Right ventricle myocardium inferior (tissue), 1 donor: ENCODE measurements at regions of chr19 and their contacts with region 1.

Region 1: DNA sequence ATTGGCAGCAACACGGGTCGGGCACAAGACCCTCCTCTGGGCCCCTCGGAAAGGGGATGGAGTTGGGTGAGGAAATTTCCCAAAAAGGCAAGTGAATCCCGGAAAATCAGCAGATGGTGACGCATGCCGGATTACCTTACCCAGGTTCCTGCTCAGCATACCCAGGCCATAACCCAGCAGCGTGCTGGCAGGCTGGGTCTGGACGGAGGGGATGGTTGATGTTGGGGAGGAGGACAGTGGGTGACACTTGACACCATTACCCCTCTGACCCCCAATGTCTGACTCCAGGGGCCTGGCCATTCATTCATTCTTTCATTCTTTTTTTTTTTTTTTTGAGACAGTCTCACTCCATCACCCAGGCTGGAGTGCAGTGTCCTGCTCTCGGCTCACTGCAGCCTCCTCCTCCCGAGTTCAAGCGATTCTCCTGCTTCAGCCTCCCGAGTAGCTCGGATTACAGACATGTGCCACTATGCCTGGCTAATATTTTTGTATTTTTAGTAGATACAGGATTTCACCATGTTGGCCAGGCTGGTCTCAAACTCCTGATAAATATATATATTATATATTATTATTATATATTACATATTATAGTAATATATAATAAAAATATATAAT is 799 bp downstream of the PVR start:
- DNase-seq: no peak
- ATAC-seq: no peak

Region 2: DNA sequence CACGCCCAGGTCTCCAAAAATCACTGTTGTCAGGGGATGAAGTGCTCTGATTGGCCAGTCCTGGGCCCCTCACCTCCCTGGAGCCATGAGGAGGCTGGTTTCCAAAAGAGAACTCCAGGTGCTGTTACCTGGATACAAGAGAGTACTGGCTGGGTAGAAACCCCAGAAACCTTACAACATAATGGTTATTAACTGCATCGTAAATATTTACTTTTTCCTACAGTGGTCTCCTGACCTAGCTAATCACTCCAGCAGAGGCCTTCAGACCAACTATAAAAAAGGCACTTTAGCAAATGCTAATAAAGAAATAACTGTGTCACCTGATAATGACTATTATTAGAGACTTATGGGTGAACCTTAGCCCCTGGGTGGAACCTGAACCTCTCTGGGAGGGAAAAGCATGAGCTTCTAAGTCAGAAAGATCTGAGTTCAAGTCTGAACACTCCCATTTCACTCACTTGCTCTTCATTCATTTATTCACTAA is 32.7 kb before region 1 on chr19:
- intact Hi-C with region 1: loop called (anchors 5 kb)
- DNase-seq: no peak
- ATAC-seq: no peak

Region 3: GRCh38 chr19:44666852-44667556 is 22.5 kb after region 1 on chr19:
- intact Hi-C with region 1: loop called (anchors 1 kb)
- DNase-seq: no peak
- ATAC-seq: no peak

Region 4: DNA sequence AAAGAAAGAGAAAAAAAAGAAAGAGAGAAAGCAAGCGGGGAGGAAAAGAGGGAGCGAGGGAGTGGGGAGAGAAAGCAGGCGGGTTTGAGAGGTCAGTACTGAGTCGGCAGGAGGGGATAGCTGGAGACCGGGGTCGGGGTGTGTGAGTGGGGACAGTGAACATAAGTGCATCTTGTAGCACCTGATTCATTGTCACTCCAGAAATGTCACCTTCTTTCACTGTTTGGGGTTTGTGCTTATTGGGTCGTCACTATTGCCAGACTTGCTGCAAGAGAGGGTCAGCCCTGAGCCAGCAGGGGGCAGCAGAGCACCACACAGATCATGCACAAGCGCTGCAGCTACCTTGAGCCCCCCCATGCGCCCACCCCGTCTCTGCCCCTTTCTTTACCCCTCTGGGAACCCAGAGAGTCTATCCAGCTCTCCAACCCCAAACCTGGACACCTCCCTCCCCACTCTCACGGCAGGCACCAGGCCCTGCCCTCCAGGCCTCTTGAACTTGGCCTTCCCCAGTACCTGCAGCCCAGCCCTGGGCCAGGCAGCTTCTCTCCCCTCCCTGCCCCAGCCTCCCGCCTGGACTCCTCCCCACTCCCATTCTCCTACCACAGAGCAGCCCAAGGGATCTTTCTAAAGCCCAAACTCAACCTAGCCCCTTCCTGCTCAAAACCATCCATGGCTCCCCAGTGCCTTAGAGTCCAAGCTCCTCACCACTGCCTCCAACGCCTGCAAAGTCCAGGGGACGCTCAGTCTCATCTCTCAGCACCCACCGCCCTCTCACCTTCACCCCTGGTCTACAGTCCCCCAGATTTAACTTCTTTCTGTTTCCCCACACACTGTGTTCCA is 44.8 kb after region 1 on chr19:
- intact Hi-C with region 1: no loop called
- DNase-seq: peak; percentile 85
- ATAC-seq: peak; percentile 65